CD8-positive, alpha-beta T cell (primary cell): ENCODE measurements at regions of chr3 and their contacts with region 1.

Region 1: GRCh38 chr3:46976326-46977190 is at the start of gene CCDC12:
- DNase-seq: peak; percentile 86 to 99 (median 93)
- ATAC-seq: peak; percentile 77
- H3K4me3 ChIP-seq: peak within 1 kb of the TSS; percentile 90 to 91
- H3K4me3 Mint-ChIP-seq: peak within 1 kb of the TSS; percentile 100
- H3K27ac ChIP-seq: peak within 1 kb of the TSS; percentile 75 to 94
- H3K27ac Mint-ChIP-seq: peak within 1 kb of the TSS; percentile 99
- H3K4me1 ChIP-seq: peaks cover 65% of the 10 kb centered on the region
- H3K4me1 Mint-ChIP-seq: peaks cover 69% of the 10 kb centered on the region
- H3K27me3 ChIP-seq: no peaks in the 10 kb centered on the region
- H3K27me3 Mint-ChIP-seq: no peaks in the 10 kb centered on the region
- CTCF ChIP-seq: no peak
- total RNA-seq, gene CCDC12: 99.9 to 107 TPM

Region 2: GRCh38 chr3:46947981-46948791 is 28.4 kb before region 1 on chr3:
- CTCF ChIA-PET with region 1: interaction called, 3 read pairs
- POLR2A ChIA-PET with region 1: interaction called, 11 read pairs
- intact Hi-C with region 1: loop called (anchors 1 to 2 kb)
- DNase-seq: peak; percentile 53 to 91 (median 79)
- ATAC-seq: peak; percentile 76
- H3K4me3 ChIP-seq: no peak overlapping the region
- H3K4me3 Mint-ChIP-seq: peak overlapping the region; percentile 33
- H3K27ac ChIP-seq: peak overlapping the region; percentile 39 to 77
- H3K27ac Mint-ChIP-seq: peak overlapping the region; percentile 97
- H3K4me1 ChIP-seq: peaks cover 78% of the 10 kb centered on the region
- H3K4me1 Mint-ChIP-seq: peaks cover 83% of the 10 kb centered on the region
- H3K27me3 ChIP-seq: no peaks in the 10 kb centered on the region
- H3K27me3 Mint-ChIP-seq: no peaks in the 10 kb centered on the region
- CTCF ChIP-seq: no peak

Region 3: GRCh38 chr3:46987743-46988401 is 11.3 kb after region 1 on chr3:
- CTCF ChIA-PET with region 1: no interaction called
- POLR2A ChIA-PET with region 1: interaction called, 8 read pairs
- intact Hi-C with region 1: loop called (anchors 1 kb)
- DNase-seq: peak; percentile 76 to 96 (median 90)
- ATAC-seq: peak; percentile 96
- H3K4me3 ChIP-seq: peak overlapping the region; percentile 23 to 42
- H3K4me3 Mint-ChIP-seq: peak overlapping the region; percentile 74
- H3K27ac ChIP-seq: peak overlapping the region in 1 of 2 experiments; percentile 67
- H3K27ac Mint-ChIP-seq: peak overlapping the region; percentile 87
- H3K4me1 ChIP-seq: peaks cover 56% of the 10 kb centered on the region
- H3K4me1 Mint-ChIP-seq: peaks cover 67% of the 10 kb centered on the region
- H3K27me3 ChIP-seq: no peaks in the 10 kb centered on the region
- H3K27me3 Mint-ChIP-seq: no peaks in the 10 kb centered on the region
- CTCF ChIP-seq: no peak

Region 4: GRCh38 chr3:47035634-47036033 is 59.1 kb after region 1 on chr3:
- CTCF ChIA-PET with region 1: no interaction called
- POLR2A ChIA-PET with region 1: no interaction called
- intact Hi-C with region 1: loop called (anchors 1 to 5 kb)
- DNase-seq: no peak
- ATAC-seq: no peak
- H3K4me3 ChIP-seq: no peak overlapping the region
- H3K4me3 Mint-ChIP-seq: no peak overlapping the region
- H3K27ac ChIP-seq: no peak overlapping the region
- H3K27ac Mint-ChIP-seq: peak overlapping the region; percentile 66
- H3K4me1 ChIP-seq: peaks cover 27% of the 10 kb centered on the region
- H3K4me1 Mint-ChIP-seq: peaks cover 49% of the 10 kb centered on the region
- H3K27me3 ChIP-seq: no peaks in the 10 kb centered on the region
- H3K27me3 Mint-ChIP-seq: no peaks in the 10 kb centered on the region
- CTCF ChIP-seq: no peak

Region 5: GRCh38 chr3:47380601-47381316 is 404.2 kb after region 1 on chr3 and contains the start of gene PTPN23:
- CTCF ChIA-PET with region 1: no interaction called
- POLR2A ChIA-PET with region 1: interaction called, 3 read pairs
- intact Hi-C with region 1: loop called (anchors 2 kb)
- DNase-seq: peak; percentile 97 to 99 (median 99)
- ATAC-seq: peak; percentile 77
- H3K4me3 ChIP-seq: peak within 1 kb of the TSS; percentile 59 to 86
- H3K4me3 Mint-ChIP-seq: peak within 1 kb of the TSS; percentile 99
- H3K27ac ChIP-seq: peak within 1 kb of the TSS; percentile 76 to 97
- H3K27ac Mint-ChIP-seq: peak within 1 kb of the TSS; percentile 100
- H3K4me1 ChIP-seq: peaks cover 30% of the 10 kb centered on the region
- H3K4me1 Mint-ChIP-seq: peaks cover 49% of the 10 kb centered on the region
- H3K27me3 ChIP-seq: no peaks in the 10 kb centered on the region
- H3K27me3 Mint-ChIP-seq: no peaks in the 10 kb centered on the region
- CTCF ChIP-seq: no peak
- total RNA-seq, gene PTPN23: 39.2 to 48.3 TPM

Region 6: DNA sequence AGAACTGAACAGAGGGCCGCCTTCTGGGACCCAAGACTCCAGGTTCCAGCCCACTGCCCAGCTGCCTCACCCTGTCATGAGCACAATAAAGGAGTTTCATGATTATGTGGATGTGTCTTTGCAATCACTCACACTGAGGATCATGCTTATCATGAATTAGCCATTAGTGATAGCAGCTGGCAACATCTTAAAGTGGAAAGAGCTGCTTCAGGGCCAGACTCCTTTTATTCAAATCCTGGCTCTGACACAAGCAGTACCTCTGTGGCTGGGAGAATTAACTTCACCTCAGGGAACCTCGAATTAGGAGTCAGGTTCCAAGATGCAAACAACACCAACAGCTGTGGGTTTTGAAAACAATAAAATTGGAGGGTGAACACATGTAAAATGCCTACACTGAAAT is 505.8 kb after region 1 on chr3:
- CTCF ChIA-PET with region 1: no interaction called
- POLR2A ChIA-PET with region 1: no interaction called
- intact Hi-C with region 1: no loop called
- DNase-seq: no peak
- ATAC-seq: no peak
- H3K4me3 ChIP-seq: no peak overlapping the region
- H3K4me3 Mint-ChIP-seq: no peak overlapping the region
- H3K27ac ChIP-seq: no peak overlapping the region
- H3K27ac Mint-ChIP-seq: no peak overlapping the region
- H3K4me1 ChIP-seq: no peaks in the 10 kb centered on the region
- H3K4me1 Mint-ChIP-seq: peaks cover 4% of the 10 kb centered on the region
- H3K27me3 ChIP-seq: no peaks in the 10 kb centered on the region
- H3K27me3 Mint-ChIP-seq: no peaks in the 10 kb centered on the region
- CTCF ChIP-seq: no peak